ENCODE measurements at regions of chr14 and their contacts with region 1.

Region 1: DNA sequence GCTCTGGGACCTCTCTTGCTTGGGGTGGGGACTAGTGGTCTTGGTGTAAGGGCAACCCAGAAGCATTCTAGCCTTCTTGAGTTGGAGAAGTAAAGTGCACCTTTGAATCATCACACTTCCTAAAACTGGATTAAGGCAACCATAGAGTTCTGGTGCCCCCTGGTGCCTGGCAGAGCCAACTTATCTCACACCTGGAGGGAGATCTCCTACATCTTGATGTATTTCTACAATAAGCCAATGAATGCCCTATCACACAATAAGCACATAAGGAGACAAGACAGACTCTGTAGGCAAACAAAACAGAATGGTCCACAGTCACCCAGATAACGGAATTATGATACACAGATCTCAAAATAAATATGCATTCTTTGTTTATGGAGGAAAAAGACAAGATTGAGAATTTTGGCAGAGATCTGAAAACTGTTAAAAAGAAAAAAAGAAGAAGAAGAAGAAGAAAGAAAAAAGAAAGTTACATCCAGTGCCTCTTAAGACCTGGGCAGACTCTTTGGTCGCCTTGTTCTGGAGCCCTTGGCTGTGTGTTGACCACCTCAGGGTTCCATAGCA is 95.9 kb upstream of the PPP2R5C start:
- DNase-seq: peak; percentile 52
- H3K4me3 ChIP-seq: no peak overlapping the region
- H3K27ac ChIP-seq: no peak overlapping the region
- H3K4me1 ChIP-seq: no peaks in the 10 kb centered on the region
- H3K27me3 ChIP-seq: no peaks in the 10 kb centered on the region
- CTCF ChIP-seq: peak; percentile 70 to 84

Region 2: DNA sequence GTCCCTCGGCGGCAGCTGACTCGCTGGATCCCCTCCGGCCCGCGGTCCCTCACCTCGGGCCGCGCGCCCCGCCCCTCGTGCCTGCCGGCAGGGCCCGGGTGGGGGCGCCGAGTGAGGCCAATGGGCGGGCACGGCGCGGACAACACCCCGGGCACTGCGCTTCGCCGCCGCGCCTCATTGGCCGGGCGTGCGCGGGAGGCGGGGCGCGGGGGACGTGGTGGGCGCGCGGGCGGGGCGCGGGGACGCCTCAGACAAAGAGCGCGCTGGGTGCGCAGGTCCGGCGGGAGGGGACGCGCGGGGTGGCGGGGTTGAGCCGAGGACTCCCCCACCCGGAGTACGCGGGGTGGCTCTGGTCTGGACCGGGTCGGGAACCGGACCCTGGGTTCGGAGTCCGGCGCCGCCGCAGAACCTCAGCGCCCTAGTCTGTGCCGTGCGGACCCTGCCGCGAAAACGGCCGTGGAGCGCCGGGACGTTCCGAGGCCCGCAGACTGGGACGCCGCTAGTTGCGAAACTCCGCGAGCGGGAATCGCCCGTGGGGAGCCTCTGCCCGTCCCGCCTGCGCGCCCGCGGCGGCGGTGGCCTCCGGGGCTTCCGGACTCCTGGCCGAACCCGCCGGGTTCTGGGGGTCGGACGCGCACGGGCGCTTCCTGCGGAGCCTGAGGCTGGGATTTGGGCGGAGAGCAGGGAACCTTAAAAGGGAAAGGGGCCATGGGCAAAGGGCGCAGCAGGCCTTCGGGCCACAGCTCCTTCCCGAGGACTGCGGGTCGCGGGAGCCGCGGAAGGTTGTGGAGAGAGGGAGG is 1359.0 kb before region 1 on chr14 and contains the start of gene SLC25A29:
- CTCF ChIA-PET with region 1: no interaction called
- dilution Hi-C with region 1: no loop called
- in situ Hi-C with region 1: no loop called
- intact Hi-C with region 1: loop called (anchors 10 kb)
- DNase-seq: peak; percentile 78
- H3K4me3 ChIP-seq: peak within 1 kb of the TSS; percentile 66 to 76 (median 69)
- H3K27ac ChIP-seq: no peak within 1 kb of the TSS
- H3K4me1 ChIP-seq: peaks cover 26% of the 10 kb centered on the region
- H3K27me3 ChIP-seq: no peaks in the 10 kb centered on the region
- CTCF ChIP-seq: no peak
- total RNA-seq, gene SLC25A29: 8.0 to 29.7 TPM

Region 3: GRCh38 chr14:100375963-100376735 is 1289.4 kb before region 1 on chr14:
- CTCF ChIA-PET with region 1: no interaction called
- dilution Hi-C with region 1: no loop called
- in situ Hi-C with region 1: loop called in 1 of 2 experiments (anchors 25 kb)
- intact Hi-C with region 1: no loop called
- DNase-seq: peak; percentile 96
- H3K4me3 ChIP-seq: peak within 1 kb of the TSS; percentile 90 to 94 (median 91)
- H3K27ac ChIP-seq: peak within 1 kb of the TSS; percentile 98
- H3K4me1 ChIP-seq: peaks cover 19% of the 10 kb centered on the region
- H3K27me3 ChIP-seq: no peaks in the 10 kb centered on the region
- CTCF ChIP-seq: no peak

Region 4: GRCh38 chr14:100654814-100655740 is 1010.5 kb before region 1 on chr14:
- CTCF ChIA-PET with region 1: no interaction called
- dilution Hi-C with region 1: no loop called
- in situ Hi-C with region 1: no loop called
- intact Hi-C with region 1: loop called (anchors 10 kb)
- DNase-seq: peak; percentile 12
- H3K4me3 ChIP-seq: no peak overlapping the region
- H3K27ac ChIP-seq: no peak overlapping the region
- H3K4me1 ChIP-seq: peaks cover 5% of the 10 kb centered on the region
- H3K27me3 ChIP-seq: no peaks in the 10 kb centered on the region
- CTCF ChIP-seq: peak; percentile 47 to 86

Region 5: DNA sequence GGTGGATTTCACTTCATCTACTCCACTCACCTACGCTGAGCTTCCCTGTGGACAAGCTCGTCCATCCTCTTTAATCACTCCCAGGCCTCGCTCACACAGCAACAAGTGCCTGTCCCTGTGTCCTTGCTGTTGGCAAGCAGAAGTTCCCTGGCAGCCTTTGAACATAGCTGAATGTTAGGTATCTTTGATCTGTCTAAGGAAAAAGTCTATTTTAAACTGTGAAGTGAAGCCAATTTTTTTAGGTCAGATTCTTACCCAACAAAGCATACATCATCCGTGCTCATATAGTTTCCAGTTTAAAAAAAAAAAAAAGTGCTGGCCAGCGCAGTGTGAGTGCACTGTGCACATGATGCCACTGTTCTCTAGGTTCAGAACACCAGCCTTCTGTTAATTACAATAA is 132.3 kb after region 1 on chr14:
- CTCF ChIA-PET with region 1: no interaction called
- dilution Hi-C with region 1: no loop called
- in situ Hi-C with region 1: no loop called
- intact Hi-C with region 1: no loop called
- DNase-seq: no peak
- H3K4me3 ChIP-seq: no peak overlapping the region
- H3K27ac ChIP-seq: no peak overlapping the region
- H3K4me1 ChIP-seq: no peaks in the 10 kb centered on the region
- H3K27me3 ChIP-seq: no peaks in the 10 kb centered on the region
- CTCF ChIP-seq: no peak